ENCODE measurements at regions of chr2 and their contacts with region 1.

Region 1: GRCh38 chr2:217988014-217988839 is 14.6 kb downstream of the TNS1 start:
- DNase-seq: peak; percentile 69
- H3K4me3 ChIP-seq: no peak overlapping the region
- H3K27ac ChIP-seq: no peak overlapping the region
- H3K4me1 ChIP-seq: peaks cover 21% of the 10 kb centered on the region
- H3K27me3 ChIP-seq: no peaks in the 10 kb centered on the region
- CTCF ChIP-seq: peak; percentile 85 to 89
- POLR2A ChIP-seq: no peak

Region 2: DNA sequence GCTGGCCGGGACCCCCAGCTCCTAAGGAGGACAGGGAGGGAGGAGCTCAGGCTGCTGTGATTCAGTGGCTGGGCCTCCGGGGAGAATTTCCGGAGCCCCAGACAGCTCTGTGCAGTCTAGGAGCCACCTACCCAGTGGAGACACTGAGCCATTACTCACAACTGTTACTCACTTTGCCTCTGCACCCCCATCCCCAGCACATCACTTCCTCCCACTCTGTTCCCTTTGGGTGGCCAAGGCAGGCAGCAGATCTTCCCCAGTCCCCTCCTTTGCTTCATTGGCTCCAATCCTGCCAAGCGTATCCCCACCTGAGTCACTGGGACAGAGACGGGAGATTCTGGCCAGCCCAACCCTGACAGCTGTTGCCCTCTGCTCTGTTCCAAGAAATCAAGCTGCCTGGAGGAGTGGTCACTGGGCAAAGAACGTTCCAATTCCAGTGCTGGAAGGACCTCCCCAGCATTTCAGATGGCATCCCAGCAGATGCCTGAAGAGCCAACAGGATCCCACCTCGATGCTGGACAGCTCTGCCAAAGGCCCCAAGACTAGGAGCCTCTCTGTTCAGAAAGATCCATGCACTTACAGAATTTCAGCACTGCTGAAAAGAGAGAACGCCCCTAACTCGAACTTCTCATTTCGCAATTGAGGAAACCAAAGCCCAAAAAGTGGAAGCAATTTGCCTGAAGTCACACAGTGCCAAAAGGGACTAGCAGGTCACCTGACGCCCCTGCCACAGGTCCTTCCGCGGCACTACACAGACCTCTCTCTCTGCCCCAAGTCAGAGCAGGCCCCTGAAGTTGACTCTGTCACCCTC is 53.7 kb before region 1 on chr2:
- CTCF ChIA-PET with region 1: interaction called, 40 read pairs
- POLR2A ChIA-PET with region 1: no interaction called
- dilution Hi-C with region 1: no loop called
- intact Hi-C with region 1: loop called (anchors 1 kb)
- DNase-seq: peak; percentile 53
- H3K4me3 ChIP-seq: no peak overlapping the region
- H3K27ac ChIP-seq: peak overlapping the region; percentile 81
- H3K4me1 ChIP-seq: peaks cover 45% of the 10 kb centered on the region
- H3K27me3 ChIP-seq: no peaks in the 10 kb centered on the region
- CTCF ChIP-seq: no peak
- POLR2A ChIP-seq: no peak

Region 3: GRCh38 chr2:217943446-217944389 is 44.5 kb before region 1 on chr2:
- CTCF ChIA-PET with region 1: interaction called, 15 read pairs
- POLR2A ChIA-PET with region 1: no interaction called
- dilution Hi-C with region 1: no loop called
- intact Hi-C with region 1: loop called (anchors 1 kb)
- DNase-seq: peak; percentile 57
- H3K4me3 ChIP-seq: peak overlapping the region in 1 of 3 experiments; percentile 12
- H3K27ac ChIP-seq: no peak overlapping the region
- H3K4me1 ChIP-seq: peaks cover 5% of the 10 kb centered on the region
- H3K27me3 ChIP-seq: no peaks in the 10 kb centered on the region
- CTCF ChIP-seq: peak in 1 of 2 donors; percentile 25
- POLR2A ChIP-seq: no peak

Region 4: GRCh38 chr2:218033590-218034496 is 45.6 kb after region 1 on chr2:
- CTCF ChIA-PET with region 1: interaction called, 10 read pairs
- POLR2A ChIA-PET with region 1: no interaction called
- dilution Hi-C with region 1: no loop called
- intact Hi-C with region 1: loop called (anchors 1 kb)
- DNase-seq: no peak
- H3K4me3 ChIP-seq: no peak overlapping the region
- H3K27ac ChIP-seq: no peak overlapping the region
- H3K4me1 ChIP-seq: no peaks in the 10 kb centered on the region
- H3K27me3 ChIP-seq: peaks cover 26 to 27% of the 10 kb centered on the region in 2 experiments
- CTCF ChIP-seq: no peak
- POLR2A ChIP-seq: no peak

Measured in endothelial cell of umbilical vein (primary cell).